Activated CD4-positive, alpha-beta T cell treated with anti-CD3 and anti-CD28 coated beads, Interleukin-2, amount 10 ng/mL, durations not matched to agents 24 days and 14 days (primary cell): ENCODE measurements at regions of chr9 and their contacts with region 1.

Region 1: GRCh38 chr9:34989003-34989945 is at the start of gene DNAJB5:
- DNase-seq: peak; percentile 100
- H3K4me3 Mint-ChIP-seq: peak within 1 kb of the TSS; percentile 86
- H3K27ac Mint-ChIP-seq: peak within 1 kb of the TSS; percentile 89
- H3K4me1 Mint-ChIP-seq: peaks cover 73% of the 10 kb centered on the region
- H3K27me3 Mint-ChIP-seq: no peaks in the 10 kb centered on the region
- total RNA-seq, gene DNAJB5: 7.7 and 10.6 TPM in 2 replicates

Region 2: DNA sequence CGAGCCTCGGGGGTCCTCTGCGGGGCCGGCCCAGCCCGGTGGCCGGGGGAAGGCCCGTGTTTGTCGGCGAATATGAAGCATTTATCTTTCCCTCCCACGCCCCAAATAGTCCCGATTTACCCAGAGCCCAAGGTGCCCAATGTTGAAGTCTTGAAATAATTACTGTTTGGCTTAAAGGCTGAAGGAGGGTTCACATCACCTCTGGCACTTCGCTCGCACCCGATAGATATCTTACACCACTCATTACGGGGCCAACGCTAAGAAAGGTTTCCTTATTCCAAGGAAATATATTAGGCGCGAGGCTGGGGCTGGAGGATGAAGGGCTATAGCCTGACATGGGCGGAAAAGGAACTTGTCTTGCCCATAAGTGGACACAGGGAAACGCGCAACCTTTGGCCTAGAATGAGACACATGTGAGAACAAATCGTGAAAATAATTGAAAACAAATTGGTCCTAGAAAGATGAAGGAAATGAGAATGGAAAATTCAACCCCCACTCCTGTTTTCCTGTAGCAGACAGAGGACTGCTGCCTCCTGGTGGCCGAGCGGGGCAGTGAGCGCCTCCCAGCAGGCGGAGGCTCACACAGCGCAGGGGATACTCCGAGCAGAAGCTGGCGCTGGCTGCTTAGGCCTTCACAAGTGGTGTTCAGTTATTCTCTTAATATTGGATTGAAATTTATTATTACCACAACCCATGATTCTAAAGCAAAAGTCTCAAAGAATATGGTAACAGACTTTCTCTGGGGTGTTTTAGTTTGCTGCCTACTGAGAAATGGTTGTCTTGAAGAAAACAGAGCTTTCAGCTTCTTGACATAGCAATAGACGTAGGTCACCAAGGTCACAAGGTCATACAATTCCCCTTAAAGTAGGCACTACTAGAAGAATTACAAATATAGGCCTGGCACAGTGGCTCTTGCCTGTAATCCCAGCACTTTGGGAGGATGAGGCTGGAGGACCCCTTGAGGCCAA is 287.2 kb before region 1 on chr9:
- intact Hi-C with region 1: loop called (anchors 5 kb)
- DNase-seq: peak; percentile 94
- H3K4me3 Mint-ChIP-seq: peak overlapping the region; percentile 77
- H3K27ac Mint-ChIP-seq: no peak overlapping the region
- H3K4me1 Mint-ChIP-seq: peaks cover 9% of the 10 kb centered on the region
- H3K27me3 Mint-ChIP-seq: peaks cover 24% of the 10 kb centered on the region

Region 3: GRCh38 chr9:34869390-34869789 is 119.9 kb before region 1 on chr9:
- intact Hi-C with region 1: no loop called
- DNase-seq: peak; percentile 46
- H3K4me3 Mint-ChIP-seq: no peak overlapping the region
- H3K27ac Mint-ChIP-seq: no peak overlapping the region
- H3K4me1 Mint-ChIP-seq: no peaks in the 10 kb centered on the region
- H3K27me3 Mint-ChIP-seq: peaks cover 8% of the 10 kb centered on the region

Region 4: DNA sequence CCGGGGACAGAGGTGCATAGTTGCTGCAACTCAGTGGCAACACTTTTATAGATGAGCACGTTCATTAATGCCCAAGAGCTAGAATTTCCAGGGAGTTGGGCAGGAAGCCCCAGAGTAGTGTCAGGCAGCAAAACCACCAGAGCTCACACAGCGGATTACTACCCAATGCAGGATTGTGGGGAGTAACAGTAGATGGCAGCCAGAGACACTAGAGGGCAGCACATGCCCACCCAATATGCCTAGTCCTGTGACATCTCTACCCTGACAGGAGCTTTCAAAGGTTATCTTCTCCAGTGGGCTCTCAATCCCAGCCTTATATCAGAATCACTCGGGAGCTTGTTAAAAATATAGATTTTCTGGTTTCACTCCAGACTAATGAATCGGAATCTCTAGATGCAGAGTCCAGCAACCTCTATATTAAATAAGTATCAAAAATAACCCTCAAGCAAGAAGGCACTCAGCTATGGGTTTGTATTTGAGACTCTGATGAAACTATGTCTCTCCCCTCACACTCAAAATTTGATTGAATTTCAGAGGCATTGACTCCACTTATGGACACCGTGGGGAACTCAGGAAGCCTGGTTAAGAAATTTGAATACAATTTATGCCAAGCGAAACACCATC is 89.6 kb before region 1 on chr9:
- intact Hi-C with region 1: loop called (anchors 1 kb)
- DNase-seq: peak; percentile 94
- H3K4me3 Mint-ChIP-seq: no peak overlapping the region
- H3K27ac Mint-ChIP-seq: no peak overlapping the region
- H3K4me1 Mint-ChIP-seq: no peaks in the 10 kb centered on the region
- H3K27me3 Mint-ChIP-seq: peaks cover 49% of the 10 kb centered on the region

Region 5: DNA sequence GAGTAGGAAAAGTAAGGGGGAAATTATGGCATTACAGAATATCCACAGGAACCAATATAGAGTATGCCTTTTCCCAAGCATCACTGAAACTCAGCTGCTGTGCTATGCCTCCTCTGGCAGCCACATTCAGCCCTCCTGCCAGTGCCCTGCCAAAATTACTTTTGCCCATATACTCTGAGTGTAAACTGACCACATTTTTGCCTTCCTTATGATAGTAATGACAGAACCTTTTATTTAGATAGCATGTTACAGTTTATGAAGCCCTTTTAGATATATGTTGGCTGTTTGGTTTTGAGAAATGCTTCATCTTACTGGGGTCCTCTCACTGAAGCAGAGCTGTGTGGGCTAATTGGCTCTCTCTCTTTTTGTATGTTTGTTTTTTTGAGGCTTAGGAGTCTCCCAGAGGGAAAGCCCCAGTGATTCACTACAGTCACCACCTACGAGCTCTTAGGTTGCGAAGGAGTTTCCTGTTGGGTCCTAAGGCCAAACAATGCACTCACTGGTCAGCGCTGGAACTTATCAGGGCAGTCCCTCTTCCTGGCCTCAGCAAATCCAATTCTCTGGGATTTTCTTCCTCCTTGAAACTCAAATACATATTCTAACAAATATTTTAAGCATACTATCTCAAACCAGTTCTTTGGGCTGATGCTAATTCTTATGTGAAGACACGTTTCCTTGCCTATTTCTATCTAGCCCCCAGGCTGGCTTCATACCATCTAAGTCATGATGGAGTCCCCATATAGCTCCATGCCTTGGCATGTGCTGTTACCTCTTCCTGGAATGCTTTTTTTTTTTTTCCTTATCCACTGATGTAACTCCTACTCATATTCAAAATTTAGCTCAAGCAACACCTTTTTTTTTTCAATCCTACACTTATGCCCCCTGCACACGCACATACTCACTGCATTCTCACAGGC is 27.4 kb before region 1 on chr9:
- intact Hi-C with region 1: loop called (anchors 1 kb)
- DNase-seq: no peak
- H3K4me3 Mint-ChIP-seq: peak overlapping the region; percentile 36
- H3K27ac Mint-ChIP-seq: peak overlapping the region; percentile 45
- H3K4me1 Mint-ChIP-seq: peaks cover 36% of the 10 kb centered on the region
- H3K27me3 Mint-ChIP-seq: peaks cover 58% of the 10 kb centered on the region

Region 6: DNA sequence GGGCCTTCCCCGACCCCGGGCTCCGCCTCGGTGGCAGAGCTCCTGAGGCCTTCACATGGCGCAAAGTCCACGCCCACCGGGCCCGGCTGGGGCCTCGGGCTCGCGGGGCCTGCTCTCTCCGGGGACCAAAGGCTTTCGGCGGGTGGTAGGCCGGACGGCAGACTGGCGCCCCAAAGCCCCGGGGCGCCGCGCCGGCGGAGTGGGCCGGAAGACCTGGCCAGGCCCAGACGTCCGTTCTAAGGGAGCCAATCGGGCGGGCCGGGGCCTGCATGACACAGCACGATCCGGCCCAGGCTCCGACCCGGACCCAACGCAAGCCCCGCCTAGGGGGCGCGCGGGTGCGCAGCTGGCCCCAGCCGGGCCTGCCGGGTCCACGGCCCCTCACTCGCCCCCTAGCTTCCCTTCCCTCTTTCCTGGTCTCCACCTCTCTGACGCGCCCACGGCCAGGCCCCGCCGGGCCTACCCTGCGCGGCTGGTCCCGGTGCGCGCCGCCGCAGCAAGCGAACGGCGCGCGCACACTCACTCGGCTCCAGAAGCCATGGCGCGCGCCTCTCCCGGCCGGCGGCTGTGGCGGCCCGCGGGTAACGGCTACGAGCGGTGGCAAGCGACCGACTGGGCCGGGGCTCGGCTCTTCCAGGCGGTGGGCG is 82.7 kb after region 1 on chr9:
- intact Hi-C with region 1: loop called (anchors 1 kb)
- DNase-seq: peak; percentile 93
- H3K4me3 Mint-ChIP-seq: peak overlapping the region; percentile 95
- H3K27ac Mint-ChIP-seq: peak overlapping the region; percentile 94
- H3K4me1 Mint-ChIP-seq: peaks cover 46% of the 10 kb centered on the region
- H3K27me3 Mint-ChIP-seq: no peaks in the 10 kb centered on the region

Region 7: GRCh38 chr9:35096035-35096849 is 107.0 kb after region 1 on chr9 and contains the start of gene PIGO:
- intact Hi-C with region 1: loop called (anchors 1 kb)
- DNase-seq: peak; percentile 97
- H3K4me3 Mint-ChIP-seq: peak within 1 kb of the TSS; percentile 91
- H3K27ac Mint-ChIP-seq: peak within 1 kb of the TSS; percentile 95
- H3K4me1 Mint-ChIP-seq: peaks cover 28% of the 10 kb centered on the region
- H3K27me3 Mint-ChIP-seq: no peaks in the 10 kb centered on the region
- total RNA-seq, gene PIGO: 32.5 and 37.2 TPM in 2 replicates

Region 8: DNA sequence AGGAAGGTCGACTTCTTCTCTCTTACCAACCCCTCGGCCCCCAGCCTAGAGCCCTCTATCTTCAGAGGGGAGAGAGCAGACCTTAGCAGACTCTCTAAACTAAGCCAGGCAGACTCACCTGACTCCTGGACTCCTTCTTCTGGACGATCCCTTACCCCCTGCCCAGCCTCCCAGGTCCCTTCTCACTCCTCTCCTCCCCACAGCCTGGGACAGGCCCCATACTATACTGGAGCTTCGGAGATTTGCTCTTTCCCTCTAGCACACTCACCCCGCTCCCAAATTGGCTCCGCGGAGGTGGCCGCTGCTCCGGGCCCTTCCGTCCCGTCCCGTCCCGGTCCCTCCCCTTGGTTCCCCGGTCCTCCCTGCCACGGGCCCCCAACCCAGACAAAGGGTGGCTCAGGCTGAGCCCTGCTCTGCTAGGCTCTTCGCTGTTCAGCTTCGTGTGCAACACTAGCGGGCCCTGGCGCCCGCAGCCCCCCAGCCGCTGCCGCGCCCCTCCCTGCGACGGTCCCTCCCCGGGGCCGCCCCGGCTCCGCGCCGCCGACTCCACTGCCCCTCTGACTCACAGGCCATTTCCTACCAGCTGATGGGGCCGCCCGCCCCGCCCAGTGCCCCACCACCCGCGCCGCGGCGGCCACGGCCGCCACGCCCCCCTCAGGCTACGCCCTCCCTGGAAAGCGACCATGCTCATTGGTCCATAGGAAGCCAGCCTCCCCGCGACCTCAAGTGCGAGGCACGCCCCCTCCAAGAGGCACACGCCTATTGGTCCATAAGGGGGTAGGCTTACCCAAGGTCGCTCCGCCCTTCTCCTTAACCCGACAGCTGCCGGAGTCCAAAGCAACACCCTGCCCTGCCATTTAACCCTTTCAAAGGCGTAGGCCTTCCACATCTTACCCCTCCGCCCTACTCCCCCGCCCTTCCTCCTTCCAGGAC is 122.0 kb after region 1 on chr9:
- intact Hi-C with region 1: loop called (anchors 1 kb)
- DNase-seq: peak; percentile 98
- H3K4me3 Mint-ChIP-seq: peak overlapping the region; percentile 71
- H3K27ac Mint-ChIP-seq: peak overlapping the region; percentile 85
- H3K4me1 Mint-ChIP-seq: peaks cover 49% of the 10 kb centered on the region
- H3K27me3 Mint-ChIP-seq: no peaks in the 10 kb centered on the region